ENCODE measurements at regions of chr19 and their contacts with region 1.

Region 1: GRCh38 chr19:2543463-2544442 is 67.8 kb downstream of the GADD45B start:
- DNase-seq: peak; percentile 90
- H3K4me3 ChIP-seq: peak overlapping the region in 2 of 4 donors; percentile 11 to 33
- H3K27ac ChIP-seq: peak overlapping the region; percentile 89 to 93 (median 90)
- H3K4me1 ChIP-seq: peaks cover 42 to 76% (median 59%) of the 10 kb centered on the region in 4 donors
- H3K27me3 ChIP-seq: no peaks in the 10 kb centered on the region
- CTCF ChIP-seq: peak in 2 of 5 experiments; percentile 16 to 42
- EP300 ChIP-seq: peak; percentile 94
- POLR2A ChIP-seq: peak; percentile 46

Region 2: DNA sequence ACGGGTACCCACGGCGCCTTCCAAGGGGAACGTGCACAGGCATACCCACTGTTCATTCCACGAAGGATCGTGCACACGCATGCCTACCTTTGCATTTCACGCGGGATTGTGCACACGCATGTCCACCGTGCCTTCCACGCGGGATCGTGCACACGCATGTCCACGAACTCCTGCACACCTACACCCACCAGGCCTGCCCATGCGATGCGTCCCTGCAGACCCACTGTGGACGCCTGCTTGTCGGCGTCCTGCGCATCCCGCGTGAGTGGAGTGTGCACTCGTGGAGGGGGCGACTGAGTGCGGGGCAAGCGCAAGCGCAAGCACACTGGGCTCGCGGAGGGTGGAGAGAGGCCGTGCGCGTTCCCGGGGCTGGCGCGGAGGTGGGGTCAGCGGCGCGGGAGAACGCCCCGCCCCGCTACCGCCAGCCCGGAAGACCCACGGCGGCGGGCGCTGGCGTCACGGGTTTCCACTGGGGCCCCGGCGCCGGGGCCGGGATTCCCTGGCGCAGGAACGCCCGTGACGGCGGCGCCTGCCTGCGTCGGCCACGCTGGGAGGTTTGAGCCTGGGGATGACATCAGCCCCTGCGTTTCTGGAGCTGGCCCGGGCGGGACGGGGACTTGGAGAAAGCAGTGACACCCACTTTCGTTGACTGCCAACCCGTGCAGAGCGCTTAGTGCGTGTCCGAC is 49.2 kb before region 1 on chr19:
- in situ Hi-C with region 1: loop called in 1 of 4 experiments (anchors 10 kb)
- intact Hi-C with region 1: no loop called
- DNase-seq: peak; percentile 82
- H3K4me3 ChIP-seq: peak overlapping the region; percentile 45 to 54 (median 48)
- H3K27ac ChIP-seq: peak overlapping the region; percentile 71 to 95 (median 90)
- H3K4me1 ChIP-seq: peaks cover 23 to 46% (median 36%) of the 10 kb centered on the region in 4 donors
- H3K27me3 ChIP-seq: peaks cover under 1% of the 10 kb centered on the region
- CTCF ChIP-seq: no peak
- EP300 ChIP-seq: no peak
- POLR2A ChIP-seq: peak; percentile 59

Region 3: DNA sequence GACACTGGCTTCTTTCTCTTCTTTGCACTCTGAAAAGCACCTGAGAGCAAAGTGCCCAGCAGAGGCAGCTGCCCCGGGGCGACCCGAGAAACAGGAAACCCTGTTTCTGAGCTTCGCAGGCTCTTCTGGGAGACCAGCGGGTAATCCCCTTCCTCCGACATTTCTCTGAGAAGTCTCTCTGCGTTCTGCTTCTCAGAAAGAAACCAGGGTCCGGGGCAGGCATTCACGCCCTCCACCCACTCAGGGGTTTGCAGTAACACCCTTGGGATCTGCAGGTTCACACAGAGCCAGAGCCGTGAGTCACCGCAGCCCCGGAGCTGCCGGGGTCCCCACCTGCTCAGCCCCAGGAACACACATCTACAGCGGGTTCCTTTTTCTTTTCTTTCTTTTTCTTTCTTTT is 18.1 kb after region 1 on chr19:
- in situ Hi-C with region 1: no loop called
- intact Hi-C with region 1: no loop called
- DNase-seq: no peak
- H3K4me3 ChIP-seq: peak overlapping the region in 1 of 4 donors; percentile 34
- H3K27ac ChIP-seq: no peak overlapping the region
- H3K4me1 ChIP-seq: peaks cover 0 to 2% (median 0%) of the 10 kb centered on the region in 4 donors
- H3K27me3 ChIP-seq: no peaks in the 10 kb centered on the region
- CTCF ChIP-seq: no peak
- EP300 ChIP-seq: no peak
- POLR2A ChIP-seq: no peak

Region 4: GRCh38 chr19:2578901-2579677 is 35.3 kb after region 1 on chr19:
- in situ Hi-C with region 1: no loop called
- intact Hi-C with region 1: loop called (anchors 5 kb)
- DNase-seq: peak; percentile 89
- H3K4me3 ChIP-seq: peak overlapping the region in 3 of 4 donors; percentile 23 to 47 (median 27)
- H3K27ac ChIP-seq: peak overlapping the region; percentile 77 to 87 (median 81)
- H3K4me1 ChIP-seq: peaks cover 15 to 39% (median 28%) of the 10 kb centered on the region in 4 donors
- H3K27me3 ChIP-seq: no peaks in the 10 kb centered on the region
- CTCF ChIP-seq: peak; percentile 82 to 97 (median 90)
- EP300 ChIP-seq: peak; percentile 77
- POLR2A ChIP-seq: no peak

Region 5: DNA sequence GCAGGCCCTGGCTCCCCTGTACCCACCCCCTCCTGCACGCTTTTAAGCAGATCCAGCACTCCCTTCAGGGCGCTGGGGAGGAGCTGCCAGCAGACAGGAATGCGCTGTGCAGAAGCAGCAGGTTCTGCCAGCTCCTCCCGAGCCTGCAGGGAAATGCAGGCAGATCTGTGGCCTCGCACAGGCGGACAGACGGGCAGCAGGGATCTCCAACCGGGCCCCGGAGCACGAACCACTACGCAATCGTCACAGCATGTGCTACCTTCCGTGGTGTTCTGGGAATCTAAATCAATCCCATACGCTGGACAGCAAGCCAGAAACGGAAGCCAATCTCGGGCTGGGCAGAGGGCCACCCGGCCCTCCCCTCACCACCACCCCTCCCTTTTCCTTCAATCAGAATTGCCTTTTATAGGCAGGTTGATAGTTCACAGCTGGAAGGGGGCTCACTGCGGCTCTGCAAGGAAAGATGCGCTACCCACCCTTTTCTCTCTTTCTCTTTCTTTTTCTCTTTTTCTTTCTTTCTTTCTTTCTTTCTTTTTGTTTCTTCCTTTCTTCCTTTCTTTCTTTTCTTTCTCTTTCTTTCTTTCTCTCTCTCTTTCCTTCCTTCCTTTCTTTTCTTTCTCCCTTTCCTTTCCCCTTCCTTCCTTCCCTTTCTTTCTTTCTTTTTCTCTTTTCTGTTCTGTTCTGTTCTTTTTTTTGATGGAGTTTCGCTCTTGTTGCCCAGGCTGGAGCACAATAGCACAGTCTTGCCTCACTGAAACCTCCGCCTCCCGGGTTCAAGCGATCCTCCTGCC is 58.8 kb after region 1 on chr19:
- in situ Hi-C with region 1: no loop called
- intact Hi-C with region 1: loop called (anchors 10 kb)
- DNase-seq: peak; percentile 74
- H3K4me3 ChIP-seq: peak overlapping the region in 3 of 4 donors; percentile 10 to 22 (median 19)
- H3K27ac ChIP-seq: peak overlapping the region; percentile 80 to 91 (median 83)
- H3K4me1 ChIP-seq: peaks cover 11 to 35% (median 23%) of the 10 kb centered on the region in 4 donors
- H3K27me3 ChIP-seq: no peaks in the 10 kb centered on the region
- CTCF ChIP-seq: peak in 1 of 5 experiments; percentile 25
- EP300 ChIP-seq: peak; percentile 98
- POLR2A ChIP-seq: no peak

Measured in transverse colon (tissue), 4 donors.